ENCODE measurements at regions of chr7 and their contacts with region 1.

Region 1: GRCh38 chr7:94449148-94449725 is 54.5 kb downstream of the COL1A2 start:
- DNase-seq: no peak
- H3K4me3 Mint-ChIP-seq: no peak overlapping the region
- H3K27ac Mint-ChIP-seq: no peak overlapping the region
- H3K4me1 Mint-ChIP-seq: no peaks in the 10 kb centered on the region
- H3K27me3 Mint-ChIP-seq: peaks cover 10% of the 10 kb centered on the region

Region 2: GRCh38 chr7:94348142-94348541 is 101.1 kb before region 1 on chr7:
- intact Hi-C with region 1: no loop called
- DNase-seq: no peak
- H3K4me3 Mint-ChIP-seq: no peak overlapping the region
- H3K27ac Mint-ChIP-seq: no peak overlapping the region
- H3K4me1 Mint-ChIP-seq: no peaks in the 10 kb centered on the region
- H3K27me3 Mint-ChIP-seq: peaks cover 7% of the 10 kb centered on the region

Region 3: DNA sequence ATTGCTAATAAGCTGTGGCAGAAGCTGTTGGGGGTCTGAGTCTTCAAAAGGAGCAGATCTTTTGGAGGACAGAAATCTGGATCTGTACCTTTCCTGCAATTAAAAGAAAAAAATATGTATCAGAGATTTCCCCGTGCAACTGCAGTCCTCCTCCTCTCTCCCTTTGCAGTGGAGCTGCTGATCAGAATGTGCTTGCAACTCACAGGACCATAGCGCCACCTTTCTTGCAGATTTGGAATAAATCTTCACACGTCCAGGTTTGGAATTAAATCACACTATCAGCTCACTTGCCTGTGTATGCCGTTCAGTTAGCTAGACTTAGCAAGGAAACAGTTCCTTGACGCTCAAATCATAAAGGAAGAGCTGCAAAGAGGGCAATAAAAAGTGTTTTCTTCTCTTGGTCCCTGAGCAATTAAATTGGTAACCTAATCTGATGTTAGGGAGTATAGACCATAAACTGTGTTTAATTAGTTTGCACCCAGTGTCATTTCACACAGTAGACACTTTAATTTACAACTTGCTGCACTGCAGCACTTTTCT is 797.7 kb after region 1 on chr7:
- intact Hi-C with region 1: loop called (anchors 2 kb)
- DNase-seq: peak; percentile 66
- H3K4me3 Mint-ChIP-seq: no peak overlapping the region
- H3K27ac Mint-ChIP-seq: no peak overlapping the region
- H3K4me1 Mint-ChIP-seq: no peaks in the 10 kb centered on the region
- H3K27me3 Mint-ChIP-seq: peaks cover 3% of the 10 kb centered on the region